ENCODE measurements at regions of chr1 and their contacts with region 1.

Region 1: DNA sequence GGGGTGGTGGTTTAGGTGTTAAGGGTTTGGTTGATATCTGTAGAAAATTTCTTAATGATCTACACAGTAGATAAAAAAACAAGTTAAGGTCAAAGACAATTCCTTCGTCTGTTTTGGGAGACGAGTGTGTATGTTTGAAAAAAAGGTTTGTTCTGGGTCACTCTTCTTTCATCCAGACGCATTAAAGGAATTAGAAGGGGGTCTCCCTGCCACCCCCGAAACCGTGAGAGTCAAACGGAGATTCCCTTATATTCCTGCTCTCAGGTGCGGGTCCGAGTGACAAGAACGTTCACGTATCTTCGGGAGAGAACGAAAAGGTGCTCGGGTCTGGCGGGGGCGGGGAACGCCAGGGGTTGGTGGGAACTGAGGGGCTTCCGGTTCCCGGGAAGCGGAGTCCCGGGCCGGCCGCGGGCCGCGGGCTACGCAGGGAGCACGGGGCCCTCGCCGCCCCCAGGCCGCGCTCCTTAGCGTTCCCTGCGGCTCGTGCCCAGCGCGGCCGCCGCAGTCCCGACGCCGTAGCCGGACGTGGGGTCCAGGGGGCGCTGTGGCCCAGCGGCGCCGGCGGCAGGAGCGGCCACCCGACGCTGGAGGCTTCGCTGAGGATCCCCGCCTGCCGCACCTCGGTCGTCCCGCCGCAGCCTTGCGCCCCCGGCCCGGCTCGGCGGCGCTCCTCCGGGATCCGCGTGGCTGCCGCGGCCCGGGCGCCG is at the start of gene ZFYVE9:
- DNase-seq: peak; percentile 76
- H3K4me3 Mint-ChIP-seq: peak within 1 kb of the TSS; percentile 86
- H3K27ac Mint-ChIP-seq: peak within 1 kb of the TSS; percentile 95
- H3K4me1 Mint-ChIP-seq: peaks cover 29% of the 10 kb centered on the region
- H3K27me3 Mint-ChIP-seq: no peaks in the 10 kb centered on the region
- CTCF ChIP-seq: peak; percentile 78
- total RNA-seq, gene ZFYVE9: 21.9 and 23.9 TPM in 2 replicates

Region 2: DNA sequence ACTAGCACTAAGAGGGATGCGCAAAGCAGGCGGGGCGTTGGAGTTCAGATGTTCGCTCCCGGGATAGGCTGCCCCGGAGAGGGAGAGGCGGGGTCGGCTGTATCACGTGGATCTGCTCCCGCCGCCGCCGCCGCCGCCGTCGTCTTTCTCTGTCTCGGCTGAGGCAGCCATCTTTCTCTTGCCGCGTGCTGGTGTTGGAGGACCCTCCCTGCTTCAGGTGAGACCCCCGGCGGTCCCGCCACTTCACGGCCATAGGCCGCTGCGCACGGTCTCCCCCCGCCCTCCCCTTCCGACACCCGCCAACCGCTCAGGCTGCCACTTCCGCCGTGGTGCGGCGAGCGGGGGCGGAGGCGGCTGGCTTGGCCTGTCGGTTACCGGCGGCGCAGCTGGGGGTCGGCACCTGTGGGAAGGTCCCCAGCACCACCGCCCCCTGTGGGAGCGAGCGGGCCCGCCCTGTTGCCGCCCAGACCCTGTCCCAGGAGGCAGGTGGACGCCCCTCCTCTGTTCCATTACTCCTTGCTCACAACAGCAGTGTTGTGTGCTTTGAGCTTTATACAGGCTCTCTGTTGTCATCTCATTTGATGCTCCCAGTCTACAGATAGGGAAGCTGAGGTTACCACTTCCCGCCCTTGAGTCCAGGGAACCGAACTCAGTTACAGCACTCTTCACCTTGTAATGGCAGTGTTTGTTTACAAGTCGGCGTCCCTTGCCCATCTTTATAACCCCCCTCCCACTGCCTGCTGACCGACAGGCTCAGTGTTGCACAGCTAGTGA is 85.3 kb before region 1 on chr1 and contains the start of gene BTF3L4:
- CTCF ChIA-PET with region 1: interaction called, 3 read pairs
- POLR2A ChIA-PET with region 1: interaction called, 14 read pairs
- intact Hi-C with region 1: no loop called
- DNase-seq: peak; percentile 93
- H3K4me3 Mint-ChIP-seq: peak within 1 kb of the TSS; percentile 97
- H3K27ac Mint-ChIP-seq: peak within 1 kb of the TSS; percentile 99
- H3K4me1 Mint-ChIP-seq: peaks cover 29% of the 10 kb centered on the region
- H3K27me3 Mint-ChIP-seq: no peaks in the 10 kb centered on the region
- CTCF ChIP-seq: no peak
- total RNA-seq, gene BTF3L4: 76.0 and 77.0 TPM in 2 replicates

Region 3: GRCh38 chr1:52111492-52111891 is 30.2 kb before region 1 on chr1:
- CTCF ChIA-PET with region 1: no interaction called
- POLR2A ChIA-PET with region 1: no interaction called
- intact Hi-C with region 1: no loop called
- DNase-seq: no peak
- H3K4me3 Mint-ChIP-seq: no peak overlapping the region
- H3K27ac Mint-ChIP-seq: no peak overlapping the region
- H3K4me1 Mint-ChIP-seq: no peaks in the 10 kb centered on the region
- H3K27me3 Mint-ChIP-seq: no peaks in the 10 kb centered on the region
- CTCF ChIP-seq: no peak

Region 4: GRCh38 chr1:52153898-52154297 is 12.2 kb after region 1 on chr1:
- CTCF ChIA-PET with region 1: interaction called, 3 read pairs
- POLR2A ChIA-PET with region 1: interaction called, 15 read pairs
- intact Hi-C with region 1: no loop called
- DNase-seq: no peak
- H3K4me3 Mint-ChIP-seq: no peak overlapping the region
- H3K27ac Mint-ChIP-seq: no peak overlapping the region
- H3K4me1 Mint-ChIP-seq: peaks cover 19% of the 10 kb centered on the region
- H3K27me3 Mint-ChIP-seq: no peaks in the 10 kb centered on the region
- CTCF ChIP-seq: no peak

Region 5: DNA sequence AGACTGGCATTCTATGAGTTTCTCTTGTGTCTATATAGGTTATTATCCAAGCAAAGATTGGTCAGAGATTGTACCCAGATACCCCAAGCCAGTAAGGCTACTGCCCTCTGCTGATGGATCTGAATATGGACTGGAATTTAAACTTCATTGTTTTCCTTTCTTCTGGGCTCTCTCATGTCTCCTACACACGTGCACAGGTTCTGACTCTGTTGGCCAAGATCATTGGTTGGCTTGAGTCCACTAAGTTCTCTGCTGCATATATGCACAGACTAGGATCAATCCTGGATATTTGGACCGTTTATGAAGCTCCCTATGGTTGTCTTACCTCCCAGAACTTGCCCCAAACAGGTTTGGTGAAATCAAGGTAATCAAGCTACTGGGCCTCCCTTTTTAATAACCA is 154.7 kb after region 1 on chr1:
- CTCF ChIA-PET with region 1: interaction called, 13 read pairs
- POLR2A ChIA-PET with region 1: interaction called, 9 read pairs
- intact Hi-C with region 1: loop called (anchors 1 kb)
- DNase-seq: peak; percentile 70
- H3K4me3 Mint-ChIP-seq: no peak overlapping the region
- H3K27ac Mint-ChIP-seq: no peak overlapping the region
- H3K4me1 Mint-ChIP-seq: no peaks in the 10 kb centered on the region
- H3K27me3 Mint-ChIP-seq: no peaks in the 10 kb centered on the region
- CTCF ChIP-seq: peak; percentile 62

Region 6: DNA sequence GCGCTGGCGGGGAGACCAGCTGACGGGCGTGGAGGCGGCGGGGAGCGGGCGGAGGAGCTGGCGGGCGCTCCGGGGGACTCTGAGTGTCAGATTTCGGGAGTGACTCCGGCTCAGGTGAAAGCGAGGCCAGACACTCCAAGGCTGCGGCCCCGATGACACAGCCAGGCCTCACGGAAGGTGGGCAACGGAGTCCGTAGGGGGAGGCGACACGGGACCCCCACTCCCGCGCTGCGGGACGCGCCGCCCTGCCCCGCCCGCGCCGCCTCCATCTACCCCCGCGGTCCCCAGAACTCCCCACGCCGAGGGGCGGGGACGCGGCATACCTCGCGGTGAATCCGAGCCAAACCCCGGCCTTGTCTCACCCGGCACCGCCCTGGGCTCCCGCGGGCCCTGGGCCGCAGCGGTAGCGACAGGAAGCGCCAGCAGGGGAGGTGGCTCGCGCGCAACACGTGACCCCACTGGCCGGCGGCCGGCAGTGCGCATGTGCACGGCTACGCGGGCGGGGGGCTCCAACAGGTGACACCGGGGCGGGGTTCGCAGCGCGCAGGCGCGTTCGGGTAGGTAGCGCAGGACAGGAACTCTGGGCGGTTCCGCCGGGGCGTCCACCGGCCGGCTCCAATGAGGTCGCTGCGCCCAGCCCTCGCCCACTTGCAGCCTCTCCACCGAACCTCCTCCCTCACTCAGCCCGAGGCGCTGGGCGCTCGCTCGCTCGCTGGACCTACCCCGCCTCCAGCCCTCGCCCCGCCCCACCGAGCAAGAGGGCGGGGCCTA is 224.3 kb after region 1 on chr1 and contains the start of gene CC2D1B:
- CTCF ChIA-PET with region 1: no interaction called
- POLR2A ChIA-PET with region 1: interaction called, 17 read pairs
- intact Hi-C with region 1: loop called (anchors 5 kb)
- DNase-seq: peak; percentile 98
- H3K4me3 Mint-ChIP-seq: peak within 1 kb of the TSS; percentile 99
- H3K27ac Mint-ChIP-seq: peak within 1 kb of the TSS; percentile 95
- H3K4me1 Mint-ChIP-seq: peaks cover 21% of the 10 kb centered on the region
- H3K27me3 Mint-ChIP-seq: no peaks in the 10 kb centered on the region
- CTCF ChIP-seq: no peak
- total RNA-seq, gene CC2D1B: 28.4 and 29.5 TPM in 2 replicates

Region 7: GRCh38 chr1:52404116-52404986 is 262.7 kb after region 1 on chr1 and contains the starts of genes ORC1 and PRPF38A:
- CTCF ChIA-PET with region 1: interaction called, 3 read pairs
- POLR2A ChIA-PET with region 1: interaction called, 12 read pairs
- intact Hi-C with region 1: no loop called
- DNase-seq: peak; percentile 98
- H3K4me3 Mint-ChIP-seq: peak within 1 kb of the TSS; percentile 100
- H3K27ac Mint-ChIP-seq: peak within 1 kb of the TSS; percentile 97
- H3K4me1 Mint-ChIP-seq: peaks cover 7% of the 10 kb centered on the region
- H3K27me3 Mint-ChIP-seq: no peaks in the 10 kb centered on the region
- CTCF ChIP-seq: peak; percentile 36
- total RNA-seq, gene ORC1: 1.8 and 2.7 TPM in 2 replicates
- total RNA-seq, gene PRPF38A: 63.8 TPM in 2 replicates

Region 8: DNA sequence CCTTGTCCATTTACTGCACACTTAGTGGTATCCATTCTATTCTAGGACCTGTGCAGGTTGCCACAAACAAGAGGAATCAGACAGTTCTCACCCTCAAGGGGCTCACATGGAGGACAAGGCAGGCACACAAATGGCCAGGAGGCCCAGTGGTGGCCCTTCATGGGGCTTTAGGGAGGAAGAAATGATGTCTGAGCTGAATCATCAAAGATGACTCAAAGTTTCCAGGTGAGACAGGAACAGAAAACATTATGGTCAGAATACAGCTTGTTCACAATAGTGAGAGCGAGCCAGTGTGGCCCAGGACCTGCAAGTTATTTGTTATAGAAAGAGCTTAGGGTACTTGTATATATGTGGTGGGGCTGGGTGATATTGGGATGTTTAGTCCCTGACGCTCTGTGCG is 517.7 kb after region 1 on chr1:
- CTCF ChIA-PET with region 1: no interaction called
- POLR2A ChIA-PET with region 1: no interaction called
- intact Hi-C with region 1: no loop called
- DNase-seq: peak; percentile 82
- H3K4me3 Mint-ChIP-seq: peak overlapping the region; percentile 18
- H3K27ac Mint-ChIP-seq: peak overlapping the region; percentile 90
- H3K4me1 Mint-ChIP-seq: peaks cover 47% of the 10 kb centered on the region
- H3K27me3 Mint-ChIP-seq: no peaks in the 10 kb centered on the region
- CTCF ChIP-seq: no peak

Measured in MCF 10A (cell line).